Ovary (tissue), 10 donors: ENCODE measurements at regions of chr6 and their contacts with region 1.

Region 1: DNA sequence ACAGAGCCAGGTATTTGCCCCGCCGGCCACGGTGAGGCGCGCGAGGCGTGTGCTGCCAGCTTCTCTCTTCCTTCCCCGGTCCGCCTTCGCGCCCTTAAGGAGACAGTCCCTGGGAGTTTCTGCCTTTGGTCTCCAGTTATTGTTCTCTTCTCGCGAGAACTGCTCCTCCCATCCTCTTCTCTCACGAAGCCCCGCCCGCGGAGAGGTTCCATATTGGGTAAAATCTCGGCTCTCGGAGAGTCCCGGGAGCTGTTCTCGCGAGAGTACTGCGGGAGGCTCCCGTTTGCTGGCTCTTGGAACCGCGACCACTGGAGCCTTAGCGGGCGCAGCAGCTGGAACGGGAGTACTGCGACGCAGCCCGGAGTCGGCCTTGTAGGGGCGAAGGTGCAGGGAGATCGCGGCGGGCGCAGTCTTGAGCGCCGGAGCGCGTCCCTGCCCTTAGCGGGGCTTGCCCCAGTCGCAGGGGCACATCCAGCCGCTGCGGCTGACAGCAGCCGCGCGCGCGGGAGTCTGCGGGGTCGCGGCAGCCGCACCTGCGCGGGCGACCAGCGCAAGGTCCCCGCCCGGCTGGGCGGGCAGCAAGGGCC is at the start of gene MAPK14:
- DNase-seq: peak; percentile 99 to 100 (median 99)
- H3K4me3 ChIP-seq: peak within 1 kb of the TSS; percentile 98
- H3K27ac ChIP-seq: peak within 1 kb of the TSS; percentile 68
- H3K4me1 ChIP-seq: peaks cover 7% of the 10 kb centered on the region
- H3K27me3 ChIP-seq: no peaks in the 10 kb centered on the region
- CTCF ChIP-seq: peak; percentile 71 to 95 (median 88)
- EP300 ChIP-seq: no peak
- POLR2A ChIP-seq: peak; percentile 78
- total RNA-seq, gene MAPK14: 28.1 to 58.8 (median 37.1) TPM

Region 2: GRCh38 chr6:35948725-35949124 is 78.9 kb before region 1 on chr6:
- intact Hi-C with region 1: no loop called
- DNase-seq: no peak
- H3K4me3 ChIP-seq: no peak overlapping the region
- H3K27ac ChIP-seq: no peak overlapping the region
- H3K4me1 ChIP-seq: no peaks in the 10 kb centered on the region
- H3K27me3 ChIP-seq: no peaks in the 10 kb centered on the region
- CTCF ChIP-seq: no peak
- EP300 ChIP-seq: no peak
- POLR2A ChIP-seq: no peak

Region 3: GRCh38 chr6:36094753-36095496 is 67.3 kb after region 1 on chr6:
- intact Hi-C with region 1: loop called (anchors 2 to 5 kb)
- DNase-seq: peak; percentile 70 to 89 (median 84)
- H3K4me3 ChIP-seq: no peak overlapping the region
- H3K27ac ChIP-seq: no peak overlapping the region
- H3K4me1 ChIP-seq: no peaks in the 10 kb centered on the region
- H3K27me3 ChIP-seq: no peaks in the 10 kb centered on the region
- CTCF ChIP-seq: peak; percentile 83 to 95 (median 84)
- EP300 ChIP-seq: no peak
- POLR2A ChIP-seq: peak; percentile 17

Region 4: DNA sequence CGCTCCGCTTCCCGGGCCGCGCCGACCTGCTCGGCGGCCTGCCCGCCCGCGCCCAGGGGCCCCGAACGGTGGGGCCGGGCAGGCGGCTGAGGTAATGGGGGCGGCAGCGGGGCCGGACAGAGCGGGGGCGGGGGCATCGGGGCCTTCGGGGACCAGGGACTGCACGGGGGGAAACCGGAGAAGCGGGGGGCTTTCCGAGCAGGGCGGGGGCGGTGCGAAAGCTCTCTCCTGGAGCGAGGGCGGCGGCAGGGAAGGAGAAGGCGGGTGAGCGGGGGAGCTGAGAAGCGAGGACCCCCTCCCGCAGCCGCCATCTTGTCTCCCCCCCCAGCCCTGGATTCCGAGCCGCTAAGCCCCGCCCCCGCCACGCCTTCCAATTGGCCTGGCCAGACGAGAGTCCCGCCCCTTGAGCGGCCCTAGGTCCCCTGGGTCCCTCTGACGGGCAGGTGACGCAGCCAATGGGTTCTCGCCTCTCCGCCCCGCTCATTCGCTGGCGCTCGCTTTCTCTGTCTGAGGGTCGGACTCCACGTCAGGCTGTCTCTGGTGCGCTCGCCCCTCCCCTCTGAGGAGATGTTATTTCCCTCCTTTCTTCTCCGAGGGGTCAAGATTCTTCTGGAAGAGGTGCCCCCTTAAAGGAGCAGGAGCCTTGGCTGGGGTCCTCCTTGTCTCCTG is 169.4 kb after region 1 on chr6:
- intact Hi-C with region 1: loop called in 1 of 4 experiments (anchors 5 kb)
- DNase-seq: peak; percentile 99 to 100 (median 100)
- H3K4me3 ChIP-seq: peak overlapping the region; percentile 61
- H3K27ac ChIP-seq: peak overlapping the region; percentile 86 to 97
- H3K4me1 ChIP-seq: peaks cover 15% of the 10 kb centered on the region
- H3K27me3 ChIP-seq: no peaks in the 10 kb centered on the region
- CTCF ChIP-seq: no peak
- EP300 ChIP-seq: no peak
- POLR2A ChIP-seq: peak; percentile 70